ENCODE measurements at regions of chr1 and their contacts with region 1.

Region 1: GRCh38 chr1:116853670-116854402 is 55.9 kb upstream of the PTGFRN start:
- DNase-seq: no peak
- ATAC-seq: peak; percentile 48
- H3K4me3 ChIP-seq: no peak overlapping the region
- H3K4me3 Mint-ChIP-seq: no peak overlapping the region
- H3K27ac ChIP-seq: no peak overlapping the region
- H3K27ac Mint-ChIP-seq: peak overlapping the region in 4 of 9 donors; percentile 43 to 87 (median 70)
- H3K4me1 ChIP-seq: peaks cover 0 to 5% of the 10 kb centered on the region in 2 donors
- H3K4me1 Mint-ChIP-seq: peaks cover 13 to 27% (median 17%) of the 10 kb centered on the region in 7 donors
- H3K27me3 ChIP-seq: no peaks in the 10 kb centered on the region
- H3K27me3 Mint-ChIP-seq: no peaks in the 10 kb centered on the region

Region 2: GRCh38 chr1:116835910-116836498 is 17.8 kb before region 1 on chr1:
- CTCF ChIA-PET with region 1: interaction called, 3 read pairs
- POLR2A ChIA-PET with region 1: no interaction called
- intact Hi-C with region 1: loop called in 1 of 2 experiments (anchors 1 kb)
- DNase-seq: no peak
- ATAC-seq: no peak
- H3K4me3 ChIP-seq: no peak overlapping the region
- H3K4me3 Mint-ChIP-seq: no peak overlapping the region
- H3K27ac ChIP-seq: no peak overlapping the region
- H3K27ac Mint-ChIP-seq: no peak overlapping the region
- H3K4me1 ChIP-seq: no peaks in the 10 kb centered on the region
- H3K4me1 Mint-ChIP-seq: peaks cover 0 to 11% (median 3%) of the 10 kb centered on the region in 7 donors
- H3K27me3 ChIP-seq: no peaks in the 10 kb centered on the region
- H3K27me3 Mint-ChIP-seq: no peaks in the 10 kb centered on the region

Region 3: GRCh38 chr1:117128323-117129079 is 274.7 kb after region 1 on chr1:
- CTCF ChIA-PET with region 1: no interaction called
- POLR2A ChIA-PET with region 1: no interaction called
- intact Hi-C with region 1: loop called in 1 of 2 experiments (anchors 1 kb)
- DNase-seq: peak in 5 of 9 donors; percentile 24 to 42 (median 31)
- ATAC-seq: peak; percentile 61
- H3K4me3 ChIP-seq: no peak overlapping the region
- H3K4me3 Mint-ChIP-seq: no peak overlapping the region
- H3K27ac ChIP-seq: no peak overlapping the region
- H3K27ac Mint-ChIP-seq: no peak overlapping the region
- H3K4me1 ChIP-seq: no peaks in the 10 kb centered on the region
- H3K4me1 Mint-ChIP-seq: peaks cover 0 to 5% (median 5%) of the 10 kb centered on the region in 7 donors
- H3K27me3 ChIP-seq: no peaks in the 10 kb centered on the region
- H3K27me3 Mint-ChIP-seq: peaks cover 5 to 30% (median 12%) of the 10 kb centered on the region in 5 donors

Measured in naive thymus-derived CD4-positive, alpha-beta T cell (primary cell).